Naive thymus-derived CD8-positive, alpha-beta T cell (primary cell): ENCODE measurements at regions of chr7 and their contacts with region 1.

Region 1: DNA sequence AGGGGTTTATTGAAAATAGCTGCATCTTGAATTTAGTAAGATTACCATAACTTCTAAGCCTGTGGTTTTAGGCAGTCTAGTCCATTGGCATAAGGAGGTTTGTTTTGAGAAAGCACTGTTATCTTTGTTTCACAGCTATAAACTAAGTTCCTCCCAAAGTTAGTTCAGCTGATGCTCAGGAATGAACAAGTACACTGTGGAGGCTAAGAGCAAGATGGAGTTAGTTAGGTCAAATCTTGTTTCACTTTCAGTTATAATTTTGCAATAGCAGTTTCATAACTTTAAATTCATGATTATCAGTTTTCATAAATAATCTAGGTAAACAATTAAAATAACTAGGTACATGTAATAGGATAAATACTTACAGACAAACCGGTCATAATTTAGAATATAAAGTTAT is 15.4 kb downstream of the SEC61G start:
- DNase-seq: no peak
- ATAC-seq: no peak
- H3K4me3 Mint-ChIP-seq: no peak overlapping the region
- H3K27ac Mint-ChIP-seq: no peak overlapping the region
- H3K4me1 Mint-ChIP-seq: peaks cover 0 to 18% (median 5%) of the 10 kb centered on the region in 4 donors
- H3K27me3 Mint-ChIP-seq: no peaks in the 10 kb centered on the region

Region 2: DNA sequence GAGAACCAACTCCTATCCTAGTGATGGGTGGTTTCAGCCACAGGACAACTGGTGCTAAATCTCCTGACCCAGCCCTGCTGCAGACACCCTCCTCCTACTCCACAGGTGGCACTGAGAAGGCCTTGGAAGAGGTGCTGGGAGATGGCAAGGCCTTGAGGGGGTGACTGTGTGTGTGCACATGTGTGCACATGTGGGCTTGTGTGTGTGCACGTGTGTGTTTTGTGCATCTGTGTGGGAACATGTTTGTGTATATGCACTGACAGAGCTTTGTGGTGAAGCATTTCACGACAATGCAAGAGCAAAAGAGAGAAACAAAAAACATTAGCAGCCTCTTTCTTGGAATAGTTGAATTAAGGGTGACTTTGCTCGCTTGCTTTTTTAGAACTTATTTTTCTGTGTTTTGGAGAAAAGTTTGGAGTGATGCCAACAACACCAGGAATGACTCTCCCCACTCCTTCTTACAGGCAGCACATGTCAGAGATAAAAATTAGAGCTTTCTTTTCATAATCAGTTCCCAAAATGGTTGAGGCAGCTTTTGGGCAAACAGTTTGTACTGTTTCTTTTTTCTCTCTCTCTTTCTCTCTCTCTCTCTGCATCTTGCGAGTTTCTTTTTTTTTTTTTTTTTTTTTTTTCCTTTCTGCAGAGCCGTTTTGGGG is 54.1 kb before region 1 on chr7:
- POLR2A ChIA-PET with region 1: no interaction called
- DNase-seq: no peak
- ATAC-seq: no peak
- H3K4me3 Mint-ChIP-seq: no peak overlapping the region
- H3K27ac Mint-ChIP-seq: no peak overlapping the region
- H3K4me1 Mint-ChIP-seq: no peaks in the 10 kb centered on the region
- H3K27me3 Mint-ChIP-seq: peaks cover 0 to 4% (median 1%) of the 10 kb centered on the region in 5 donors

Region 3: DNA sequence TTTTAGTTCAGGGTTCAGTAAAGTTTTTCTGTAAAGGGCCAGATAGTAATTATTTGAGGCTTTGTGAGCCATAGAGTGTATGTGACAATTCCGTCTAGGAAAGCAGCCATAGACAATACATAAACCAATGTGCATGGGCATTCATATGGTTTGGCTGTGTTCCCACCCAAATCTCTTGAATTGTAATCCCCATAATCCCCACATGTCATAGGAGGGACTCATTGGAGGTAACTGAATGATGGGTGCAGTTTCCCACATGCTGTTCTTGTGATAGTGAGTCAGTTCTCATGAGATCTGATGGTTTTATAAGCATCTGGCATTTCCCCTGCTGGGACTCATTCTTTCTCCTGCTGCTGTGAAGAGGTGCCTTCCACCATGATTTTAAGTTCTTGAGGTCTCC is 14.5 kb before region 1 on chr7:
- POLR2A ChIA-PET with region 1: no interaction called
- DNase-seq: no peak
- ATAC-seq: no peak
- H3K4me3 Mint-ChIP-seq: no peak overlapping the region
- H3K27ac Mint-ChIP-seq: no peak overlapping the region
- H3K4me1 Mint-ChIP-seq: no peaks in the 10 kb centered on the region
- H3K27me3 Mint-ChIP-seq: peaks cover 0 to 1% (median 0%) of the 10 kb centered on the region in 5 donors

Region 4: GRCh38 chr7:55173671-55174070 is 430.1 kb after region 1 on chr7:
- POLR2A ChIA-PET with region 1: interaction called, 11 read pairs
- DNase-seq: no peak
- ATAC-seq: no peak
- H3K4me3 Mint-ChIP-seq: no peak overlapping the region
- H3K27ac Mint-ChIP-seq: no peak overlapping the region
- H3K4me1 Mint-ChIP-seq: peaks cover 0 to 3% (median 0%) of the 10 kb centered on the region in 4 donors
- H3K27me3 Mint-ChIP-seq: peaks cover 0 to 17% (median 2%) of the 10 kb centered on the region in 5 donors